Colonic mucosa (tissue), 4 donors: ENCODE measurements at regions of chr7 and their contacts with region 1.

Region 1: GRCh38 chr7:142603870-142604448 is 145.3 kb upstream of the PRSS1 start:
- DNase-seq: peak; percentile 57
- H3K4me3 ChIP-seq: no peak overlapping the region
- H3K27ac ChIP-seq: no peak overlapping the region
- H3K4me1 ChIP-seq: no peaks in the 10 kb centered on the region
- H3K27me3 ChIP-seq: no peaks in the 10 kb centered on the region
- CTCF ChIP-seq: peak; percentile 71

Region 2: DNA sequence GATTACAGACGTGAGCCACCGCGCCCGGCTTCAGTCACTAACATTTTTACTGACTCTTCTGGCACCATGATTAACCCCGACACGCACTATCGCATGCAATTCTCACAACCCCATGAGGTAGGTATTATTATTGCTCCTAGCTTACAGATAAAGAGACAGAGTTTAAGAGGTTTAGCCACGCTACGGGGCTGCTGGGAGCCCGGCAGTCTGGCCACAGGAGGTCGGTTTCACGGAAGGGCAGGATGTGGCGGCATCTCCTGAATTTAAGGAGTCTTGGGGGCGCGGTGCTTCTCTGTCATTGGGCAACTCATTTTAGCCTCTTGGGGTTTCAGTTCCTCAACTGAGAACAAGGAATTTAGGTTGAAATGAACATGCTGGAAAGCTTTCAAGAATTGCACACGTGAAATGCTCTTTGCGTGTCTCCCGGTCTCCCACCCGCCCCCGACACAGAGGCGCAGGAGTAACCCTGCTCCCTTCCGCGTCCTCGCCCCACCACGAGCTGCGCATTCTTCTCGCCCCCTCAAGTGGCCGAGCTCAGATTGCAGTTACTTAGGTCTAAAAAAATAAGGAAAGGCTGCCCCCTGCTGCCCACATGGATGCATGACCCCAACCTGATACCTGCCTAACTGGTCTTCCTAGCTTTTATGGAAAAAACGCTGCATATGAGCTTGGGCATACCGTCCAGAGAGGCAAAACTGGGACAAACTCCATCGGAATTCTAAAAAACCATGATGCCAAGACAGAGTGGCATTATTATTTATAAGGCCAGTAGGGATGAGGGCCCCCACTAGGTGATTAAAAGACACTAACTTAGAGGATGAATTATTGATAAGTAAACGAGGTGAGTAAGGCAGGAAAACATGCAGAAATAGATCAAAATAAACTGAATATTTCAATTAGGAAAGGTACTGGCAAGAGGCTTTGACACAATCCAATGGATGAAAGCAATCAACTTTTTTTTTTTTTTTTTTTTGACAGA is 179.3 kb after region 1 on chr7:
- intact Hi-C with region 1: loop called (anchors 10 kb)
- DNase-seq: peak; percentile 86
- H3K4me3 ChIP-seq: peak overlapping the region; percentile 18
- H3K27ac ChIP-seq: no peak overlapping the region
- H3K4me1 ChIP-seq: no peaks in the 10 kb centered on the region
- H3K27me3 ChIP-seq: no peaks in the 10 kb centered on the region
- CTCF ChIP-seq: peak; percentile 83

Region 3: DNA sequence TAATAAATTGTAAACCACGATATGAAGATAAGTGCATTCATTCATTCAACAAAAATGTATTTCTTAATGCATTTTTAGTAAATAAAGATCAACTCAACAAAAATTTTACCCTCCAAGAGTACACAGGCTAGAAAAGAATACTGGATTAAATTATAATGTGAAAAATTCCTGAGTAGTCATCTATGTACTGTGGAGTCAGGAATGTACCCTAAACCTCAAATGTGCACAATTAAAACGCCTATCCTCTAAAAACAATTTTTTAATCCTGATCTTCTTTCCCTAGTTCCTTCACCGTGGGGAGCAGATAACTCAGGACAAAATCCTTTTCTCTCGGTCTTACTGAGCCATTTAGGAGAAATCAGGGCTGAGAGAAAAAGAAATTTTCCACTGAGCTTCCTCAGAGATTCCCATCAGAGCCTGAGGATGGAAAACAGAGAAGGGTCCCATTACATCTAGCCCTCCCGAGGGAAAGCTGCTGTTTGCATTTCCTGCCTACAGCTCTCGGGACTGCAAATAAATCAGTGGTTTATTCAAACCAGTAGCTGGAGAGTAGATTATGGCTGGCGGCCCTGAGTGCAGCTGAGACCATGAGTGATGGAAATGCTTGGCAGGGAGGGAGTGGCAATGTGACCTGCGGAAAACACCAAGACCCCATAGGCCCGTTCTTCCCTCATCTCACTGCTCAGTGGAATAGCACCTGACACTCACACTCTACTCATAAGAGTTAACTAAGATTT is 625.3 kb after region 1 on chr7:
- intact Hi-C with region 1: loop called (anchors 10 kb)
- DNase-seq: no peak
- H3K4me3 ChIP-seq: no peak overlapping the region
- H3K27ac ChIP-seq: no peak overlapping the region
- H3K4me1 ChIP-seq: no peaks in the 10 kb centered on the region
- H3K27me3 ChIP-seq: no peaks in the 10 kb centered on the region
- CTCF ChIP-seq: no peak